ENCODE measurements at regions of chr1 and their contacts with region 1.

Region 1: GRCh38 chr1:65036545-65037180 is 70.3 kb upstream of the JAK1 start:
- DNase-seq: no peak
- H3K4me3 ChIP-seq: no peak overlapping the region
- H3K27ac ChIP-seq: peak overlapping the region; percentile 11
- H3K4me1 ChIP-seq: peaks cover 18% of the 10 kb centered on the region
- H3K27me3 ChIP-seq: no peaks in the 10 kb centered on the region
- CTCF ChIP-seq: no peak

Region 2: DNA sequence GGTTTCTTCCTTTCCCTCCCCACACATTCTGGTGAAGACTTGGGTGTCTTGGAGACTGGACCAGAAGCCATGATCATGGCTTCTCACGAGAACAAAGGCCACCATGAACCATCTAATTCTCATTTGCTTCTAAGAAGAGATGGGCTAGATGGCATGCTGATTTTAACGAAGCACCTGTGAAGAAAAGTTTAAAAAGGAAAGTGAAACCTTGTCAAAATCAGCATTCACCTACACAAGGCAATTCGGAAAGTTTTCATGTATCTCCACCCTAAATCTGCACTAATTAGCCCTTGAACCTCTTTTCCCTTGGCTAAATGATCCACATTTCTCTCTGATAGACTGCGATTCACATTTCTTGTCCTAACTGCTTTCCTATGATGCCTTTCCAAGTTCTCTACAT is 406.1 kb before region 1 on chr1:
- CTCF ChIA-PET with region 1: no interaction called
- POLR2A ChIA-PET with region 1: interaction called, 10 read pairs
- intact Hi-C with region 1: no loop called
- DNase-seq: no peak
- H3K4me3 ChIP-seq: no peak overlapping the region
- H3K27ac ChIP-seq: no peak overlapping the region
- H3K4me1 ChIP-seq: peaks cover 22% of the 10 kb centered on the region
- H3K27me3 ChIP-seq: no peaks in the 10 kb centered on the region
- CTCF ChIP-seq: no peak

Region 3: GRCh38 chr1:64723783-64724182 is 312.9 kb before region 1 on chr1:
- CTCF ChIA-PET with region 1: no interaction called
- POLR2A ChIA-PET with region 1: interaction called, 14 read pairs
- intact Hi-C with region 1: no loop called
- DNase-seq: no peak
- H3K4me3 ChIP-seq: no peak overlapping the region
- H3K27ac ChIP-seq: no peak overlapping the region
- H3K4me1 ChIP-seq: no peaks in the 10 kb centered on the region
- H3K27me3 ChIP-seq: no peaks in the 10 kb centered on the region
- CTCF ChIP-seq: no peak

Measured in A673 (cell line).